B cell (primary cell): ENCODE measurements at regions of chr9 and their contacts with region 1.

Region 1: GRCh38 chr9:5186416-5187169 is 1.2 kb upstream of the INSL6 start:
- DNase-seq: peak; percentile 74
- ATAC-seq: peak; percentile 79
- H3K4me3 ChIP-seq: no peak overlapping the region
- H3K4me3 Mint-ChIP-seq: no peak overlapping the region
- H3K27ac ChIP-seq: no peak overlapping the region
- H3K27ac Mint-ChIP-seq: no peak overlapping the region
- H3K4me1 ChIP-seq: no peaks in the 10 kb centered on the region
- H3K4me1 Mint-ChIP-seq: peaks cover 2% of the 10 kb centered on the region
- H3K27me3 ChIP-seq: no peaks in the 10 kb centered on the region
- H3K27me3 Mint-ChIP-seq: no peaks in the 10 kb centered on the region
- CTCF ChIP-seq: peak; percentile 78

Region 2: DNA sequence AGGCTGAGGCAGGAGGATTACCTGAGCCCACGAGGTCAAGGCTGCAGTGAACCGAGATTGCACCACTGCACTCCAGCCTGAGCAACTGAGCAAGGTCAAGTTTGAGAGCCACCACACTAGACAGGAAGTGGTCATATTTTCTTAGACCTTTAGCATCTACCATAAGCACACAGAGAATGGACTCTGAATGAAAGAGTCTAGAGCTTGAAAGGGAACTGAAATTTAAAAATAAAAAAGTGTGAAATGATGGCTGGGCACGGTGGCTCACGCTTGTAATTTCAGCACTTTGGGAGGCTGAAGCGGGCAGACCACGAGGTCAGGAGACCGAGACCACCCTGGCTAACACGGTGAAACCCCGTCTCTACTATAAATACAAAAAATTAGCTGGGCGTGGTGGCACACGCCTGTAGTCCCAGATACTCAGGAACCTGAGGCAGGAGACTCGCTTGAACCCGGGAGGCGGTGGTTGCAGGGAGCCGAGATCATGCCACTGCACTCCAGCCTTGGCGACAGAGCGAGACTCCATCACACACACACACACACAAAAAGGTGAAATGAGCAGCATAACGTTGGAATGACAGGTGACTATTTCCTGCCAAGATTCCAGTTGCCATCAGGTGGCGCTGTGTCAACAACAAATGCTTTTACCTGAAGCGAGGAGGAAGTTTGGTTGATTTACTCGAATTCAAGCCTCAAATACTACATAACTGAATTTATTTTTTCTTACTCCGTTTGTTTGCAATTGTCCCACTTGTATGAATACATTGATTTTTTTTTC is 424.3 kb before region 1 on chr9:
- CTCF ChIA-PET with region 1: interaction called, 4 read pairs
- POLR2A ChIA-PET with region 1: no interaction called
- intact Hi-C with region 1: loop called (anchors 5 kb)
- DNase-seq: peak; percentile 87
- ATAC-seq: peak; percentile 73
- H3K4me3 ChIP-seq: peak overlapping the region; percentile 22 to 62 (median 56)
- H3K4me3 Mint-ChIP-seq: peak overlapping the region; percentile 82
- H3K27ac ChIP-seq: peak overlapping the region in 1 of 2 donors; percentile 28
- H3K27ac Mint-ChIP-seq: peak overlapping the region; percentile 17
- H3K4me1 ChIP-seq: peaks cover 10 to 20% of the 10 kb centered on the region in 2 donors
- H3K4me1 Mint-ChIP-seq: peaks cover 22% of the 10 kb centered on the region
- H3K27me3 ChIP-seq: no peaks in the 10 kb centered on the region
- H3K27me3 Mint-ChIP-seq: no peaks in the 10 kb centered on the region
- CTCF ChIP-seq: peak; percentile 89

Region 3: DNA sequence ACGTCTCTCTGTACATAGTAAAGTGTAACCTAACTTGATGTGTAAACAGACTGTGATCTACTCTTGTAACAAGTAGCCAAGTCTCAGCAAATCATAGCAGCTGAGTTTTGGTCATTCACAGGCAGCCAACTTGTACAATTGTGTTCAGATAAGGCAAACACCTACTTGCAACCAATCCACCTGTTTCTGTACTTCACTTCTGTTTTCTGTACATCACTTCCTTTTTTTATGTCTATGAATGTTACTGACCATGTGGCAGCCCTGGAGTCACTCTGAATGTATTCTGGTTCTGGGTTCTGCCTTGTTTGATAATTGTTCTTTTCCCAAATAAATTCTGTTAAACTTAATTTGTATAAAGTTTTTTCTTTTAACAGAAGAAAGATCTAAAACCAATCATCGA is 91.9 kb after region 1 on chr9:
- CTCF ChIA-PET with region 1: no interaction called
- POLR2A ChIA-PET with region 1: no interaction called
- intact Hi-C with region 1: no loop called
- DNase-seq: peak; percentile 25
- ATAC-seq: peak; percentile 33
- H3K4me3 ChIP-seq: no peak overlapping the region
- H3K4me3 Mint-ChIP-seq: no peak overlapping the region
- H3K27ac ChIP-seq: no peak overlapping the region
- H3K27ac Mint-ChIP-seq: no peak overlapping the region
- H3K4me1 ChIP-seq: peaks cover 0 to 2% of the 10 kb centered on the region in 2 donors
- H3K4me1 Mint-ChIP-seq: peaks cover 17% of the 10 kb centered on the region
- H3K27me3 ChIP-seq: no peaks in the 10 kb centered on the region
- H3K27me3 Mint-ChIP-seq: no peaks in the 10 kb centered on the region
- CTCF ChIP-seq: no peak

Region 4: GRCh38 chr9:5450359-5451091 is 263.9 kb after region 1 on chr9 and contains the start of gene CD274:
- CTCF ChIA-PET with region 1: interaction called, 27 read pairs
- POLR2A ChIA-PET with region 1: no interaction called
- intact Hi-C with region 1: no loop called
- DNase-seq: peak; percentile 85
- ATAC-seq: peak; percentile 91
- H3K4me3 ChIP-seq: peak within 1 kb of the TSS; percentile 75 to 93 (median 81)
- H3K4me3 Mint-ChIP-seq: peak within 1 kb of the TSS; percentile 83
- H3K27ac ChIP-seq: peak within 1 kb of the TSS; percentile 72 to 83
- H3K27ac Mint-ChIP-seq: peak within 1 kb of the TSS; percentile 94
- H3K4me1 ChIP-seq: peaks cover 21 to 30% of the 10 kb centered on the region in 2 donors
- H3K4me1 Mint-ChIP-seq: peaks cover 49% of the 10 kb centered on the region
- H3K27me3 ChIP-seq: no peaks in the 10 kb centered on the region
- H3K27me3 Mint-ChIP-seq: no peaks in the 10 kb centered on the region
- CTCF ChIP-seq: peak; percentile 57
- total RNA-seq, gene CD274: 5.2 and 7.0 TPM in 2 replicates

Region 5: DNA sequence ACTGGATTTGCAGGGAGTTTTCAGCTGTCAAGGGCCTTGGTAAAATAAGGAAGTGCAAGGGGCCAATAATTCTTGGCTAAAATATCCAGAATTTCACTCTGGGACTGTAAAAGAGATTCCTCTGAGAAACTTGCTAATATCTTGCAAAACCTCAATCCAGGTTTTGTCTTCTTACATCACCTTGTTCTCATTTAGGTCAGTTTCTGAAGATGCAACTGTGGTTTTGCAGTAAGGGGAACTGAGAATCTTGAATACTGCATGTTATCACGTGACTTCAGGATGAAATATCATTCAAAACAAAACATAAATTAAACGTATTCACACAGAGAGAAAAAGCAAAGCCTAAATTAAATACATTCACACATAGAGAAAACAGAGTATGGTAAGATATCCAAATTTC is 407.3 kb after region 1 on chr9:
- CTCF ChIA-PET with region 1: interaction called, 88 read pairs
- POLR2A ChIA-PET with region 1: no interaction called
- intact Hi-C with region 1: loop called (anchors 1 kb)
- DNase-seq: peak; percentile 84
- ATAC-seq: peak; percentile 57
- H3K4me3 ChIP-seq: no peak overlapping the region
- H3K4me3 Mint-ChIP-seq: peak overlapping the region; percentile 50
- H3K27ac ChIP-seq: peak overlapping the region in 1 of 2 donors; percentile 40
- H3K27ac Mint-ChIP-seq: peak overlapping the region; percentile 69
- H3K4me1 ChIP-seq: peaks cover 41 to 44% of the 10 kb centered on the region in 2 donors
- H3K4me1 Mint-ChIP-seq: peaks cover 68% of the 10 kb centered on the region
- H3K27me3 ChIP-seq: no peaks in the 10 kb centered on the region
- H3K27me3 Mint-ChIP-seq: no peaks in the 10 kb centered on the region
- CTCF ChIP-seq: no peak

Region 6: GRCh38 chr9:5764130-5764868 is 577.7 kb after region 1 on chr9:
- CTCF ChIA-PET with region 1: interaction called, 3 read pairs
- POLR2A ChIA-PET with region 1: no interaction called
- intact Hi-C with region 1: loop called (anchors 10 kb)
- DNase-seq: no peak
- ATAC-seq: no peak
- H3K4me3 ChIP-seq: no peak overlapping the region
- H3K4me3 Mint-ChIP-seq: no peak overlapping the region
- H3K27ac ChIP-seq: peak overlapping the region in 1 of 2 donors; percentile 33
- H3K27ac Mint-ChIP-seq: peak overlapping the region; percentile 50
- H3K4me1 ChIP-seq: peaks cover 0 to 4% of the 10 kb centered on the region in 2 donors
- H3K4me1 Mint-ChIP-seq: peaks cover 5% of the 10 kb centered on the region
- H3K27me3 ChIP-seq: no peaks in the 10 kb centered on the region
- H3K27me3 Mint-ChIP-seq: no peaks in the 10 kb centered on the region
- CTCF ChIP-seq: no peak

Region 7: DNA sequence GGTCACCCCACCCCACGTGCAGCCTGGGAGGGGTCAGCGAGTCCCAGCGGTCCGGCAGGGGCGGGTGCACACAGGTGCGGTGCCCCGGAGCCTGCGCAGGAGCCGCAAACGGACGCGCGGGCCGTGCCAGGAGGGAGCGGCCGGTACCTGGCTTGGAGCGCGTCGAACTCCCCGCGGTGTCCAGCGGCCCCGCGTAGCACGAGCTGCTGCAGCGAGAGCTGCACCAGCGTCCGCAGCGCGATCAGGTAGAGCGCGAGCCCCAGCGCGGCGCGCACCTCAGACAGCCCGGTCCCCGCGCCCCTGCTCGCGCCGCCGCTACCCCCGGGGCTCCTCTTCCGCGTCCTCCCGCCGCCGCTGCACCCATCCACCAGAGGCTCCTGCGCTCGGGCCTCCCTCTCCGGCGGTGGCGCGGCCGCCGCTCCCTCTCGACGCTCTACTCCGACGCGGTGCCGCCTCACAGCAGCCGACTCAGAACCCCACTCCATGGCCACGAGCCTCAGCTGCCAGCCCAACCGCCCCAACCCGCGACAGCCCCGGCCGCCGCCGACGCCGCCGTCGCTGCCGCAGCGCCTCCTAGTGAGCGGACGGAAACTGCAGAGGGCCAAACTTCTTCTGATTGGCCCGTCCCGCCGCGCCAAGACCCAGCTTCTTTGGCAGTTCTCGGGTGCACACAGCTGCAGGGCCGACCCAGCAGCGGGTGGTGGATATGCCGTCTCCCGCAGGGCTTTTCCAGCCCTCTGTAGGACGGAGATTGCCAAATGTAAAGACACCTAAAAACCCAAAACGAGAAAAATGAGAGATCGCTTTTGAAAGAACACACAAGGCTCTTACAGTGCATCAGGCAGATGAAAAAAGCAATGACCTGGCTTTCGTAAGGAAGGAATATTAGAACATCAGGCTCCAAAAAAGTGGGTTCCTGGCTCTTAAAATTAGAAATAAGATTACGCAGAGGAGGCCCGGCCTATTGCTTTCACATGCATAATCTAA is 646.2 kb after region 1 on chr9 and contains the start of gene ERMP1:
- CTCF ChIA-PET with region 1: interaction called, 7 read pairs
- POLR2A ChIA-PET with region 1: no interaction called
- intact Hi-C with region 1: loop called (anchors 5 kb)
- DNase-seq: peak; percentile 93
- ATAC-seq: peak; percentile 89
- H3K4me3 ChIP-seq: peak within 1 kb of the TSS; percentile 63 to 83 (median 75)
- H3K4me3 Mint-ChIP-seq: peak within 1 kb of the TSS; percentile 95
- H3K27ac ChIP-seq: peak within 1 kb of the TSS in 1 of 2 donors; percentile 50
- H3K27ac Mint-ChIP-seq: peak within 1 kb of the TSS; percentile 93
- H3K4me1 ChIP-seq: peaks cover 19 to 25% of the 10 kb centered on the region in 2 donors
- H3K4me1 Mint-ChIP-seq: peaks cover 37% of the 10 kb centered on the region
- H3K27me3 ChIP-seq: no peaks in the 10 kb centered on the region
- H3K27me3 Mint-ChIP-seq: no peaks in the 10 kb centered on the region
- CTCF ChIP-seq: peak; percentile 96
- total RNA-seq, gene ERMP1: 10.6 and 12.8 TPM in 2 replicates